Common myeloid progenitor, CD34-positive (primary cell): ENCODE measurements at regions of chr6 and their contacts with region 1.

Region 1: DNA sequence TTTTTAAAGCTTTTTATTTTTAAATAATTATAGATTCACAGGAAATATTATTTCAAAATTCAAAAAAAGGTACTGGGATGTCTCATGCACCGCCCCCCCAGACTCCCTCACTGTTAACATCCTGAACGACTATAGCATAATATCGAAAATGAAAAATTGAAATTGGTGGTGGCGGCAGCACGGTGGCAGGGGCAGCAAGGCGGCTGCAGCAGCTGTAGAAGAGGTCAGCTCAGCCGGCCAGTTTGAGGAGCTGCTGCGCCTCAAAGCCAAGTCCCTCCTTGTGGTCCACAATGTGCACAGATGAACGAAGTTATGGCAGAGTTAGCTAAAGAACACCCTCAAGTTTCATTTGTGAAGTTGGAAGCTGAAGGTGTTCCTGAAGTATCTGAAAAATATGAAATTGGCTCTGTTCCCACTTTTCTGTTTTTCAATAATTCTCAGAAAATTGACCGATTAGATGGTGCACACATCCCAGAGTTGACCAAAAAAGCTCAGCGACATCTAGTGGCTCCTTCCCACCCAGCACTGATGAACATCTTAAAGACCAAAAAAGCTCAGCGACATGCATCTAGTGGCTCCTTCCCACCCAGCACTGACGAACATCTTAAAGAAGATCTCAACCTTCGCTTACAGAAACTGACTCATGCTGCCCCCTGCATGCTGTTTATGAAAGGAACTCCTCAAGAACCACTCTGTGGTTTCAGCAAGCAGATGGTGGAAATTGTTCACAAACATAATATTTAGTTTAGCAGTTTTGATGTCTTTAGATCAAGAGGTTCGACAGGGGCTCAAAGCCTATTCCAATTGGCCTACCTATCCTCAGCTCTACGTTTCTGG is 100.8 kb downstream of the FAM217A start:
- DNase-seq: peak; percentile 92 to 97 (median 96)
- H3K4me3 ChIP-seq: peak overlapping the region in 1 of 7 experiments; percentile 10
- H3K27ac ChIP-seq: no peak overlapping the region
- H3K4me1 ChIP-seq: peaks cover 2 to 7% (median 3%) of the 10 kb centered on the region in 4 experiments
- H3K27me3 ChIP-seq: no peaks in the 10 kb centered on the region

Region 2: DNA sequence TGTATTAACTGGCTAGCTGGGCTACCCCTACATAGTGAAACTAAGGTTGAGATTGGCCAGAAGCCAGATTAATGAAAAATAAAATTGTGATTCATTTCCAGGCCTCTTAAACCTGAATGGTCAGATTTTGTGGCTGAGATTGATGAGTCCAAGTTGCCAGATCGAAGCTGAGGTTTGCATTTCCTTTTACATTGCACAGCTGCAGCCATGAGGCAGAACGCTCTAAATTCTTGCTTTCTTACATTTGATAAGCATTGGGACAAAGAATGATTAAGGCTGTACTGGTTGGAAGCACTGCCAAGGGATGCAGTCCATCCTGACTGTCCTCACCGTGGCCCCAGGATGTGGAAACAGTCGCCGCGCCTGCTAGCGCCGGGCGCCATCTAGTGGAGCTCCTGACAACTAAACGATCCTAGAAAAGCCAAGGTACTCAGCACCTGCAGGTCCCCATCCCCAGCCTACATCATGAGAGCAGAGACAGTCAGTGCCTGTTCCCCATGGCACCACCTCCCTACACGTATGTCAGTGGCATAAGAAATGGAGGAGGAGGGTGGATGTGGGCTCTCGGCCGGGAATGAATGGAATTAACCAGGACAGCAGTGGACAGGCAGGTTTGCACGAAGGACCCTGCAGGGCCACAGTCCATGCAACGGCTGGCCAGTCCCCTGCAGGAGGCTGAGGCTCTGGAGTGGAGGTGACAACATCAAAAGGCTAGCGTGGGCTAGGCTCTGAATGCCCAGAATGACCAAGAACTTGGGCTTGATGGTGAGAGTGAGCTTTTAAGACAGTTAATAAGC is 245.6 kb before region 1 on chr6:
- CTCF ChIA-PET with region 1: interaction called, 15 read pairs
- POLR2A ChIA-PET with region 1: no interaction called
- DNase-seq: peak in 2 of 3 donors; percentile 51 to 55
- H3K4me3 ChIP-seq: no peak overlapping the region
- H3K27ac ChIP-seq: no peak overlapping the region
- H3K4me1 ChIP-seq: peaks cover 0 to 11% (median 6%) of the 10 kb centered on the region in 4 experiments
- H3K27me3 ChIP-seq: no peaks in the 10 kb centered on the region

Region 3: DNA sequence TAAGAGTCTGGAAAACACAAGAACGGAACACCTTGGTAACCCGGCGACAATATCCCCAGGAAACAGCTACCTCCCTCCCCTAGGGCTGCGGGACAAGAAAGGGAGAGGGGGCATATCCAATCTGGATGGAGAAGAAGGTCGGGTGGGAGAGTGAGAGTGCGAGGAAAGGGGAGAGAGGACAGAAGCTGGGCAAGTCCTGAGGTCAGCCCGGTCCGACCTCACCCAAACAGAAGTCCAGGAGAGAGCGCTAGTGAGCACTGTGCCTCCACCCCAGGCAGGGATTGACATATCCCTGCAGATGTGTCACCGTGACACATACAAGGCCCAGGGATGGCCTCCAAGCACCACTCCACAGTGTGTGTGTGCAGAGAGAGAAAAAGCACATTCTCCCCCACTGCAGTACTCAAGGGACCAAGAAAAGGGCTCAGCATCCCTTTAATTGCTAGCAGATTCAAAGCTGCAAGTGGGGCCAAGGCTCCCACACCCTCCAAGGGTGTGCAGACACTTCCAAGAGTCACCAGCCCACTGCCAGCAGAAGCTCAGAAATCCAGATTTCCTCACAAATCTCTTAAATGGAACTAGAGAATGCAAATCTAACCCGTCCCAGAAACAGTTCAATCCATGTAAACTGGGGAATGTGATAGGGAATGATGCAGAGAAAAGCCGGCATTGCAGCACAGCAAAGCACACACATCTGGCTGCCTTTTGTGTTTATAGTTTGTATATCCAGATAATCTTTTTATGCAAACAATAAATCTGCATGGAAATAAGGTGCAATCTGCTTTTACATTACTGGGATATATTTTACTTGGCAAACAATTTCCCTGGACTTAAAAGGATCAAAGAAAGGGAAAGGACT is 229.7 kb before region 1 on chr6:
- CTCF ChIA-PET with region 1: interaction called, 90 read pairs
- POLR2A ChIA-PET with region 1: no interaction called
- DNase-seq: peak in 2 of 3 donors; percentile 57 to 59
- H3K4me3 ChIP-seq: no peak overlapping the region
- H3K27ac ChIP-seq: no peak overlapping the region
- H3K4me1 ChIP-seq: peaks cover 0 to 49% (median 37%) of the 10 kb centered on the region in 4 experiments
- H3K27me3 ChIP-seq: peaks cover 0 to 4% (median 0%) of the 10 kb centered on the region in 5 experiments

Region 4: DNA sequence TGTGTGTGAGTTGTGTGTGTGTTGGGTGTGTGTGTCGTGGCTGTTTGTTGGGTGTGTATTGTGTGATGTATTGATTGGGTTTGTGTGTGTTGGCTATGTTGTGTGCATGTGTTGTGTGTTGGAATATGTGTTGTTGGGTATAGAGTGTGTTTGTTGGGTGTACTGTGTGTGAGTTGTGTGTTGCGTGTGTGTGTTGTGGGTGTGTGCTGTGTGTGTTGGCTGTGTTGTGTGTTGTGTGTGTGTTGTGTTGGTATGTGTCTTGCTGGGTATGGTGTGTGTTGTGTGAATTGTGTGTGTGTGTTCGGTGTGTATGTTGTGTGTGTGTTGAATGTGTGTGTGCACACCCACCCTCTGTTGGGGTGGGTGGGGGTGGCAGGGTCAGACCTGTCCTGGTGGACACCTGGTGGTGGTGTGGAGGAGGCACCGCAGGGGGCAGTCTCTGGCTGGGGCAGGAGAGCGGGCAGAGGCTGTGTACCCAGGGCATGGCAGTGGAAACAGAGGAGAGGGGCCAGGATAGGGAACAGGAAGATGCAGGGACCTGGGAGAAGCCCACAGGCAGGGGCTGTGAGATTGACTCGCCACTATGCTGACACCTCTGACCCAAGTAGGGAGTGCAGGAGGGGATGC is 201.1 kb before region 1 on chr6:
- CTCF ChIA-PET with region 1: no interaction called
- POLR2A ChIA-PET with region 1: no interaction called
- DNase-seq: peak; percentile 26 to 64 (median 26)
- H3K4me3 ChIP-seq: no peak overlapping the region
- H3K27ac ChIP-seq: no peak overlapping the region
- H3K4me1 ChIP-seq: peaks cover 0 to 4% (median 1%) of the 10 kb centered on the region in 4 experiments
- H3K27me3 ChIP-seq: no peaks in the 10 kb centered on the region

Region 5: DNA sequence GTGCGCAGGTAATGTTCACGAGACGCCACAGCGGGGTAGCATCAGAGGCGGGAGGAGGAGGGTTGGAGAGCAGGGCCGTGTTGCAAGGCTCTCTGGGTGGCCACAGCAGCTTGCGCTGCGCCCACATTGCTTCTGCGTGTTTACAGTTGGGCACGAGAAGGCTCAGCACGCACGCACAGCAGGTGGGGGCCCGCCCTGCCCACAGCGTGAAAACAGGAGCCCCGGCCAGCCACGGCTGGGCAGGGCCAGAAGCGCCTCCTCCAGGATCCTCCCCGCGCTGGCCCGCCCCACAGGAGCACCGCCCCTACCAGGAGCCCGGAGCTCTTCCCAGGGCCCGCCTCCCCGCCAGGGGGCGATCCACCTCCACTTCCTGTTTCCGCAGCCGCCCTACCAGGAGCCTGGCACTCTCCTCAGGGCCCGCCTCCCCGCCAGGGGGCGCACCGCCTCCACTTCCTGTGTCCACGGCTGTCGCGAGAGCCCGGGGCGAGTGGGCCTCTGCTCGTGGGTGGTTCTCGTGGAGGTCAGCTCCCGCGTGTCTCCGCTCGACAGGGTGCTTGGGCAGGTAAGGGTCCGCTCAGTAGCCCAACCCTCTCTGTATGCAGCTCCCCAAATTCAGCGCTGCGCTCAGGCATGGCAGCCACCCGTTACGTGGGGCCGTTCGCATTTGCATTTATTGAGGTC is 129.0 kb before region 1 on chr6 and contains the start of gene FAM50B:
- CTCF ChIA-PET with region 1: interaction called, 53 read pairs
- POLR2A ChIA-PET with region 1: no interaction called
- DNase-seq: peak; percentile 85 to 92 (median 91)
- H3K4me3 ChIP-seq: peak within 1 kb of the TSS; percentile 28 to 84 (median 64)
- H3K27ac ChIP-seq: peak within 1 kb of the TSS in 1 of 2 experiments; percentile 34
- H3K4me1 ChIP-seq: peaks cover 0 to 11% (median 3%) of the 10 kb centered on the region in 4 experiments
- H3K27me3 ChIP-seq: no peaks in the 10 kb centered on the region

Region 6: GRCh38 chr6:3929281-3929798 is 48.8 kb before region 1 on chr6:
- CTCF ChIA-PET with region 1: interaction called, 15 read pairs
- POLR2A ChIA-PET with region 1: interaction called, 4 read pairs
- DNase-seq: no peak
- H3K4me3 ChIP-seq: no peak overlapping the region
- H3K27ac ChIP-seq: no peak overlapping the region
- H3K4me1 ChIP-seq: no peaks in the 10 kb centered on the region
- H3K27me3 ChIP-seq: no peaks in the 10 kb centered on the region

Region 7: GRCh38 chr6:3957321-3957720 is 20.8 kb before region 1 on chr6:
- CTCF ChIA-PET with region 1: interaction called, 11 read pairs
- POLR2A ChIA-PET with region 1: no interaction called
- DNase-seq: no peak
- H3K4me3 ChIP-seq: no peak overlapping the region
- H3K27ac ChIP-seq: no peak overlapping the region
- H3K4me1 ChIP-seq: no peaks in the 10 kb centered on the region
- H3K27me3 ChIP-seq: no peaks in the 10 kb centered on the region

Region 8: GRCh38 chr6:3990692-3991501 is 12.8 kb after region 1 on chr6:
- CTCF ChIA-PET with region 1: interaction called, 27 read pairs
- POLR2A ChIA-PET with region 1: no interaction called
- DNase-seq: peak; percentile 84 to 88 (median 86)
- H3K4me3 ChIP-seq: peak overlapping the region in 5 of 7 experiments; percentile 6 to 73 (median 49)
- H3K27ac ChIP-seq: no peak overlapping the region
- H3K4me1 ChIP-seq: peaks cover 0 to 6% (median 1%) of the 10 kb centered on the region in 4 experiments
- H3K27me3 ChIP-seq: no peaks in the 10 kb centered on the region

Region 9: DNA sequence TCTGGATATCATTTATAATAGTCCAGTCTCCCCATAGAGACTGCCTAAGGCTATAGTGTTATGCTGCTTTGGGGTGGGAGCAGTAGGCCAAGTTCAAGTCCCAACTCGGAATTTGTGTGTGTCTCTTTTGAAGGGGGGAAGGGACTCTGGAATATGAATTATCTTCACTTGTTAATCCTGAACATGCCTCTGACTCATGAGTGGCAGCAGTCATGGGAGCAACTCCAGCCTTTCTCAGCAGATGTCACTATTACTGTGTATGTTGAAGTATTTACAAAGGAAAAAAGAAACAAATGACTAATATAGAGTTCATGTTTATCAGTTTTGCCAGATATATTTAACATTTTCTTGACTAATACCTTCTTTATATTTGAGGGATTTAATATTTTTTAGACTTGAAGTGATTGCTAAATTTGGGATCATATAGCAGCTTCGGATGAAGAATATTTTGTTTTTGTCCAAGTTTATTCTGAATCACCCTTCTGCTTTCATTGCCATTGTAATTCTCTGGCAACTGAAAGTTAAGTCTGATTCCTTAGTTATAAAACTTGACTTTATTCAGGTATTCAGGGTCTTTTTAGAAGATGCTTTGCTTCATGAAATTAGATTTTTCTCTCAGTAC is 77.4 kb after region 1 on chr6:
- CTCF ChIA-PET with region 1: no interaction called
- POLR2A ChIA-PET with region 1: no interaction called
- DNase-seq: peak; percentile 46 to 67 (median 66)
- H3K4me3 ChIP-seq: no peak overlapping the region
- H3K27ac ChIP-seq: no peak overlapping the region
- H3K4me1 ChIP-seq: peaks cover 7 to 23% (median 14%) of the 10 kb centered on the region in 4 experiments
- H3K27me3 ChIP-seq: no peaks in the 10 kb centered on the region

Region 10: DNA sequence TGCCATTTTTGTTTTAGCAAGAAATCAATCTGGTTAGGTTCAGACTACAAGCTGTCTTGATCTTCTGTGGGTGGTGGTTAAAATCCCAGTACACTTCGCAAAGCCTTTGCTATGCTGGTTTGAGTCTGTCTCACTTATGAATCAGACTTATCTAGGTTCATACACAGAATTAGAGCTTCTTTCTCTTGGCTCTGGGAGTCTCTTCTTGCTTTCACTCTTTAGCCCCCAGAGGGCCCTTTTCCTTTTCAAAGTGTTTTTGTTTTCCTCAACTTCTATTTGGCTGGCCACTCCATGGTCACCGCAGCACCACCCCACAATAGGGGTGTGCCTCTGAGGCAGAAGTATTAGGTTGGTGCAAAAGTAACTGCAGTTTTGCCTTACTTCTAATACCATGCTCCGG is 136.0 kb after region 1 on chr6:
- CTCF ChIA-PET with region 1: no interaction called
- POLR2A ChIA-PET with region 1: no interaction called
- DNase-seq: no peak
- H3K4me3 ChIP-seq: no peak overlapping the region
- H3K27ac ChIP-seq: no peak overlapping the region
- H3K4me1 ChIP-seq: no peaks in the 10 kb centered on the region
- H3K27me3 ChIP-seq: peaks cover 0 to 2% (median 0%) of the 10 kb centered on the region in 5 experiments